CD8-positive, alpha-beta T cell (primary cell): ENCODE measurements at regions of chr1 and their contacts with region 1.

Region 1: DNA sequence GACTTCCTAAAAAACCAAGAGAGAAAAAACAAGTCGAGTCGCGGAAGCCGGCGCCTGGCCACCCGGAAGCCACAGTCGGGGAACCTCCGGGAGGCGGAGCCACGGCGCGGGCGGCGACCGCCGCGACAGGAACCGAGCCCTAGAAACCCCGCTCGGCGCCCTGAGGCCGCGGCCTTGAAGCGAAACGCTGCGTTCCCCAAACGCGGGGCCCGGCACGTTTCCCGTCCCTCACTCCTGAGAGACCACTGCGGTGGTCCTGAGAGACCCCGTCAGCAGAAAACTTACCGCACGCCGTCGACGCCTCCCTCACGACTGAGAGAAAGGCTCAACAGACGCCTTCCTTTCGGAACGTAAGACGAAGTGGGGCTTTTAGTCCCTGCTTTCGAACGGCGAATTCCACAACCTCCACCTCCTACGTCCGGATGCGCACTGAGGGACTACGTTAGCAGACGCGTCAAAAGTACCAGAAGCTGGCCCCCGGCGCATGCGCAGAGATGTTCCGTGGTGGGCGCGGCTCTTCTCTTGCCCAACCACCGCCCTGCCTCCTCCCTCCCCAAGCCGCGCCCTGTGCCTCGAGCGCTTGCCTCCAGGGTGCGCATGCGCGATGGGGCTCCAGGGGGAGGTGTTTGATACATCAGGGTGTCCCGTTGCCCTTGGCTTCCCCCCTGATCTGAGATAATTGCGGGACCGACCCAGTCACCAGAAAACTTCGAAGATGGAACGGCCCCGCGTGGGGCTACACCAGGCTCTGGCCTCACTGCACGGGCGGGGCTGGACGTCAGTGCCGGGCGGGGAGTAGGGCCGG is at the start of gene RSRP1:
- DNase-seq: peak; percentile 99 to 100 (median 100)
- ATAC-seq: peak; percentile 86
- H3K4me3 ChIP-seq: peak within 1 kb of the TSS; percentile 82
- H3K4me3 Mint-ChIP-seq: peak within 1 kb of the TSS; percentile 96
- H3K27ac ChIP-seq: peak within 1 kb of the TSS; percentile 97 to 99
- H3K27ac Mint-ChIP-seq: peak within 1 kb of the TSS; percentile 99
- H3K4me1 ChIP-seq: peaks cover 45% of the 10 kb centered on the region
- H3K4me1 Mint-ChIP-seq: peaks cover 43% of the 10 kb centered on the region
- H3K27me3 ChIP-seq: no peaks in the 10 kb centered on the region
- H3K27me3 Mint-ChIP-seq: no peaks in the 10 kb centered on the region
- CTCF ChIP-seq: no peak
- total RNA-seq, gene RSRP1: 472 to 482 TPM

Region 2: DNA sequence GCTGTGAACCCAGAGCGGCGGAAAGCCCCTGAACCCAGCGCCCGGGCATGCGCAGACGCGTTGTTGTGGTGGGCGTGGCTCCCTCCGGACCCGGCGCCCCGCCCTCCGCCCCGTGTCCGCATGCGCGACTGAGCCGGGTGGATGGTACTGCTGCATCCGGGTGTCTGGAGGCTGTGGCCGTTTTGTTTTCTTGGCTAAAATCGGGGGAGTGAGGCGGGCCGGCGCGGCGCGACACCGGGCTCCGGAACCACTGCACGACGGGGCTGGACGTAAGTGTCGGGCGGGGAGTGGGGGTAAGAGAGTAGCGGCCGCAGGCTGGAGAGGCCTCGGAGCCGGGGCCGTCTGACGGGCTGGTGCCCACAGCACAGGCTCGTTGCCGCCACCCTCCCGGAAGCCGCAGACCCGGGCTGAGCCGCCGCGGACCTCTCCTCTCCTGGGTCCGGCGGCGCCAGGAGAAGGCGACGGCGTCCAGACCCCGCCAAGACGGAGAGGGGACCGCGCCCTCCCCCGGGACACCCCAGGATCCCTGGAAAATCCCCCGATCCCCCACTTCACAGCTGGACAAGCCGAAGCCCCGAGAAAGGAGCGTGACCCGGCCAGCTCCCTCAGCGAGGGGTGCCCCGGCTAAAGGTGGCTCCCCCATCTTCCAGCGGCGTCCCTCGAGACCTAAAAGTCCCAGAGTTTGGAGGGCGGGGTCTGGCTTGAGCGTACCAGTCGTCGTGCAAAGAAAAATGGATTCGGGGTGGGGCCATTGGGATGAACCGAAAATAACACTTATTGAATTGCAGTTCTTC is 91.2 kb after region 1 on chr1 and contains the start of gene TMEM50A:
- CTCF ChIA-PET with region 1: no interaction called
- POLR2A ChIA-PET with region 1: interaction called, 6 read pairs
- intact Hi-C with region 1: loop called (anchors 2 to 5 kb)
- DNase-seq: peak; percentile 87 to 95 (median 90)
- ATAC-seq: peak; percentile 72
- H3K4me3 ChIP-seq: peak within 1 kb of the TSS; percentile 67 to 86
- H3K4me3 Mint-ChIP-seq: peak within 1 kb of the TSS; percentile 95
- H3K27ac ChIP-seq: peak within 1 kb of the TSS; percentile 89
- H3K27ac Mint-ChIP-seq: peak within 1 kb of the TSS; percentile 97
- H3K4me1 ChIP-seq: peaks cover 24% of the 10 kb centered on the region
- H3K4me1 Mint-ChIP-seq: peaks cover 44% of the 10 kb centered on the region
- H3K27me3 ChIP-seq: no peaks in the 10 kb centered on the region
- H3K27me3 Mint-ChIP-seq: no peaks in the 10 kb centered on the region
- CTCF ChIP-seq: no peak
- total RNA-seq, gene TMEM50A: 103 to 118 TPM